Caco-2 (cell line): ENCODE measurements at regions of chr11 and their contacts with region 1.

Region 1: DNA sequence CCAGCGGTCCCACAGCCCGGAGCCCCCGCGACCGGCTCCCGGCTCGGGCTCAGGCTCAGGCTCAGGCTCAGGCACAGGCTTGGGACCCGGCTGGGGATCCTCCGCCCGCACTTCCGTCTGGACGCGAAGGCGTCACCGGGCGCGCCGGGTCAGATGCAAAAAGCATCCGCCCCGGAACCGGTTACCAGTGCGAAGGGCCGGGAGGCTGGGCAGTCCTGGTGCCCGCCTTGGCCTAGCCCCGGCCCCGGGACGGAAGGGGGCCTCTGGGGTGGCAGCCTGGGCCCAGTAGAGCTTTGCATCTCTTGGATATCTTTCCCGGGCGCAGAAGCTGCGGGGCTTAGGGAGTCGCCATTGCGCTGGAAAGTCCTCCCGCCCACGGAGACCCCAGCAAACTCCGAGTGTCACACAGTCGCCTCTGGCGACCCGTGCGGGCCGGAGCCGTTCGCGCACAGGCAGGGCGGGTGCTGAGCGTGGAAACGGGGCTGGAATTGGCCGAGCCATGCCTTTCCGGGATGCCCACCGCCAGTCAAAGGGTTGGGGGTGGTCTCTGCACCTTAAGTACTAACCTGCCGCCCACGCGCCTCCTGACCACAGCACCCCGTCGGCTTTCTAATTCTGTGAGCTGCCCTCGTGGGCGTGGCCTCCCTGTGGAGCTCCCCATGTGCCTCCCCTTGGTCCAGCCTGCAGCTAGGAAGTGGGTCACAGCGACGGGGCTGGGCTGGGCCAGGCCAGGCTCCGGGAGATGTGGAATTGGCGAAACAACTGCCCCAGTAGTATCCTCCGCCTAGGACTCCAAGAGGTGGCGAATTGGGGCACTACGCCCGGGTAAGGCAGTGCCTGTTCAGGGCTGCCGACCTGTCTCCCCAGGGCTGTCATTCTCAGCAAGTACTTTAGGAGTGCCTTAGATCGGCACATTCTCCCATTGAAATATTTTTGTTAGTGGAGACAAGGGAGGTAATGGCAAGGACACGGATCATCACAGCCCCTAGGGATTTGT is at the start of gene TMEM9B:
- DNase-seq: peak; percentile 88 to 92
- H3K4me3 ChIP-seq: peak within 1 kb of the TSS; percentile 95
- H3K4me3 Mint-ChIP-seq: peak within 1 kb of the TSS; percentile 84
- H3K27ac Mint-ChIP-seq: peak within 1 kb of the TSS; percentile 48
- H3K4me1 ChIP-seq: no peaks in the 10 kb centered on the region
- H3K4me1 Mint-ChIP-seq: peaks cover 6% of the 10 kb centered on the region
- H3K27me3 ChIP-seq: no peaks in the 10 kb centered on the region
- H3K27me3 Mint-ChIP-seq: no peaks in the 10 kb centered on the region
- CTCF ChIP-seq: no peak
- total RNA-seq, gene TMEM9B: 26.0 and 29.6 TPM in 2 replicates

Region 2: GRCh38 chr11:8688414-8689362 is 275.9 kb before region 1 on chr11:
- CTCF ChIA-PET with region 1: interaction called, 19 read pairs
- POLR2A ChIA-PET with region 1: interaction called, 8 read pairs
- intact Hi-C with region 1: loop called (anchors 2 kb)
- DNase-seq: peak; percentile 97 to 99
- H3K4me3 ChIP-seq: peak overlapping the region; percentile 54
- H3K4me3 Mint-ChIP-seq: peak overlapping the region; percentile 67
- H3K27ac Mint-ChIP-seq: peak overlapping the region; percentile 7
- H3K4me1 ChIP-seq: peaks cover 35% of the 10 kb centered on the region
- H3K4me1 Mint-ChIP-seq: peaks cover 34% of the 10 kb centered on the region
- H3K27me3 ChIP-seq: no peaks in the 10 kb centered on the region
- H3K27me3 Mint-ChIP-seq: no peaks in the 10 kb centered on the region
- CTCF ChIP-seq: peak in 1 of 2 experiments; percentile 62

Region 3: GRCh38 chr11:8768625-8769333 is 195.8 kb before region 1 on chr11:
- CTCF ChIA-PET with region 1: interaction called, 12 read pairs
- POLR2A ChIA-PET with region 1: no interaction called
- intact Hi-C with region 1: no loop called
- DNase-seq: peak; percentile 43 to 55
- H3K4me3 ChIP-seq: no peak overlapping the region
- H3K4me3 Mint-ChIP-seq: no peak overlapping the region
- H3K27ac Mint-ChIP-seq: no peak overlapping the region
- H3K4me1 ChIP-seq: peaks cover 14% of the 10 kb centered on the region; the same call in 1 of the 2 replicates
- H3K4me1 Mint-ChIP-seq: peaks cover 12% of the 10 kb centered on the region
- H3K27me3 ChIP-seq: no peaks in the 10 kb centered on the region
- H3K27me3 Mint-ChIP-seq: no peaks in the 10 kb centered on the region
- CTCF ChIP-seq: peak in 1 of 2 experiments; percentile 60

Region 4: GRCh38 chr11:8813658-8814057 is 151.0 kb before region 1 on chr11:
- CTCF ChIA-PET with region 1: interaction called, 4 read pairs
- POLR2A ChIA-PET with region 1: no interaction called
- intact Hi-C with region 1: loop called (anchors 2 kb)
- DNase-seq: peak; percentile 88
- H3K4me3 ChIP-seq: no peak overlapping the region
- H3K4me3 Mint-ChIP-seq: no peak overlapping the region
- H3K27ac Mint-ChIP-seq: no peak overlapping the region
- H3K4me1 ChIP-seq: peaks cover 13% of the 10 kb centered on the region
- H3K4me1 Mint-ChIP-seq: peaks cover 7% of the 10 kb centered on the region
- H3K27me3 ChIP-seq: no peaks in the 10 kb centered on the region
- H3K27me3 Mint-ChIP-seq: no peaks in the 10 kb centered on the region
- CTCF ChIP-seq: peak; percentile 88 to 91

Region 5: DNA sequence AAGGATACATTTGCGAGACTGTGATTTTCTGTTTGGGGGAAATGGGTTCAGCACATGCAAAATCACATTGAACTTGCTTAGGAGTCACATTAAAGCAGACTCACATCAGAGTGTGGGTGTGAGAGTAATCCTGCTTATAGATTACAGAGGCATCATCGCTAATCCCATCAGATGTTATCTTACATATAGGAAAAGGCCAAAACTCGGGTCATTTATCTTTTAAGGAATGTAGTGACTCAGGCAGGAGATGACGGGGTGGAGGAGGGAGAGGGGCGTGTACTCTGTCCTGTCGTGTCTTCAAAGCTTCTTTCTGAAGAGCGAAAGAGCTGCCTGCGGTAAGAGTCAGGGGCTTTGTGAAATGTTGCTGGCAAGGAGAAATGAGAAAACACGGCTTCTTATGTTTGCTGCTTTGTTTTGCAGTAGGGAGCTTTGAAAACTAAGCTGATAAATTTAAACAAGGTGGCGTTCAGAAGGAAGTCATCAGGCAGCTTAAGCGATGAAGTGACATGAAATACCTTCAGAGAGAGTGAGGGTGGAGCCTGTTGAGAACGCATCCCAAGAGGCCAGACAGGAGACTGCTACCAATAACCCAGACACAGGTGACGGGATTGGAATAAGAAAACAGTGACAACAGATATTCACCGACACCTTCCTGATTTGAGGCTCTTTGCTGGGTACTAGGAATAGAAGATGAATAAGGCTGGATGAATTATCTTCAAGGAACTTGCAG is 29.7 kb before region 1 on chr11:
- CTCF ChIA-PET with region 1: interaction called, 6 read pairs
- POLR2A ChIA-PET with region 1: interaction called, 7 read pairs
- intact Hi-C with region 1: loop called (anchors 1 kb)
- DNase-seq: peak; percentile 74 to 78
- H3K4me3 ChIP-seq: peak overlapping the region; percentile 23
- H3K4me3 Mint-ChIP-seq: peak overlapping the region; percentile 79
- H3K27ac Mint-ChIP-seq: peak overlapping the region; percentile 85
- H3K4me1 ChIP-seq: peaks cover 22% of the 10 kb centered on the region
- H3K4me1 Mint-ChIP-seq: peaks cover 10% of the 10 kb centered on the region
- H3K27me3 ChIP-seq: no peaks in the 10 kb centered on the region
- H3K27me3 Mint-ChIP-seq: no peaks in the 10 kb centered on the region
- CTCF ChIP-seq: no peak